Esophagus squamous epithelium (tissue), 5 donors: ENCODE measurements at regions of chr19 and their contacts with region 1.

Region 1: GRCh38 chr19:38729653-38730469 is 14.4 kb downstream of the CAPN12 start:
- DNase-seq: no peak
- H3K4me3 ChIP-seq: no peak overlapping the region
- H3K27ac ChIP-seq: peak overlapping the region in 3 of 4 donors; percentile 68 to 88 (median 77)
- H3K4me1 ChIP-seq: peaks cover 15 to 79% (median 18%) of the 10 kb centered on the region in 3 donors
- H3K27me3 ChIP-seq: no peaks in the 10 kb centered on the region
- CTCF ChIP-seq: peak; percentile 79 to 86 (median 80)
- POLR2A ChIP-seq: no peak

Region 2: GRCh38 chr19:38683393-38684080 is 46.3 kb before region 1 on chr19:
- intact Hi-C with region 1: no loop called
- DNase-seq: no peak
- H3K4me3 ChIP-seq: peak overlapping the region in 1 of 4 donors; percentile 17
- H3K27ac ChIP-seq: peak overlapping the region; percentile 95 to 99 (median 98)
- H3K4me1 ChIP-seq: peaks cover 52 to 100% (median 86%) of the 10 kb centered on the region in 3 donors
- H3K27me3 ChIP-seq: no peaks in the 10 kb centered on the region
- CTCF ChIP-seq: no peak
- POLR2A ChIP-seq: peak in 2 of 4 donors; percentile 27 to 28

Region 3: GRCh38 chr19:38831142-38831605 is 101.3 kb after region 1 on chr19:
- intact Hi-C with region 1: loop called (anchors 10 kb)
- DNase-seq: no peak
- H3K4me3 ChIP-seq: peak overlapping the region; percentile 53 to 88 (median 74)
- H3K27ac ChIP-seq: peak overlapping the region; percentile 87 to 95 (median 93)
- H3K4me1 ChIP-seq: peaks cover 24 to 65% (median 39%) of the 10 kb centered on the region in 3 donors
- H3K27me3 ChIP-seq: no peaks in the 10 kb centered on the region
- CTCF ChIP-seq: no peak
- POLR2A ChIP-seq: no peak